ENCODE measurements at regions of chr6 and their contacts with region 1.

Region 1: GRCh38 chr6:129621247-129621646 is 88.7 kb downstream of the ARHGAP18 start:
- DNase-seq: peak; percentile 57
- H3K4me3 Mint-ChIP-seq: no peak overlapping the region
- H3K27ac Mint-ChIP-seq: no peak overlapping the region
- H3K4me1 Mint-ChIP-seq: no peaks in the 10 kb centered on the region
- H3K27me3 Mint-ChIP-seq: no peaks in the 10 kb centered on the region

Region 2: DNA sequence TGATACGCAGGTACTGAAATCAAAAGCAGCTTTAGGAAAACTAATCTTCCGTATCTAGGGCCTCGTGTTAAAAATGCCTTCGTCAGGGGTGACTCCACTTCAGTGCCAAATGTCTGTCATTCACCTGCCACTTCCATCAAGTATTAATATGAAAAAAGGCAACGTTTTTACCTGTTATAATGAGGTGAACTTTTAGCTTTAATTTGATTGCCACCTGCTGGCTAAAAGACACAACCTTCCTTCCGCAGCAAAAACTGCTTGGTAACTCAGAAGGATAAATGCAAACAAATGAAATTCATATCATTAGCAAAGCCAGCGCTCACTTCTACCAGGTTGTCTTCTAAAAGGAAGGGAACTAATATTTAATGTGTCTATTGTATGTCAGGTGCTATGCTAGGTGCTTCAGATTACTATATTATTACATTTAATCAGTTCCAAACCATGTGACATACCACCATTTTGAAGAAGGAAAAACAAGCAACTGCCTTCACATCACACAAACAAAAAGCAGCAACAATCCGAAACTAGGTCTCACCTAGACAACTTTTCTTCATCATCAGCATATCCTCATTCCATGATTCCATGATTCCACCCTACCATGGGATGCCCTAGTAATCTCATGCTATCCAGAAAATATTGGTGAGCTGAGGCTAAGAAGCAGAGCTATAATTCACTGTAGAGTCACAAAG is 109.4 kb after region 1 on chr6:
- CTCF ChIA-PET with region 1: interaction called, 8 read pairs
- POLR2A ChIA-PET with region 1: no interaction called
- intact Hi-C with region 1: loop called (anchors 2 kb)
- DNase-seq: peak; percentile 19
- H3K4me3 Mint-ChIP-seq: no peak overlapping the region
- H3K27ac Mint-ChIP-seq: no peak overlapping the region
- H3K4me1 Mint-ChIP-seq: peaks cover 11% of the 10 kb centered on the region
- H3K27me3 Mint-ChIP-seq: no peaks in the 10 kb centered on the region

Measured in activated CD4-positive, alpha-beta memory T cell treated with anti-CD3 and anti-CD28 coated beads for 36 hours (primary cell).